Sciatic nerve (tissue), 2 donors: ENCODE measurements at regions of chr2 and their contacts with region 1.

Region 1: DNA sequence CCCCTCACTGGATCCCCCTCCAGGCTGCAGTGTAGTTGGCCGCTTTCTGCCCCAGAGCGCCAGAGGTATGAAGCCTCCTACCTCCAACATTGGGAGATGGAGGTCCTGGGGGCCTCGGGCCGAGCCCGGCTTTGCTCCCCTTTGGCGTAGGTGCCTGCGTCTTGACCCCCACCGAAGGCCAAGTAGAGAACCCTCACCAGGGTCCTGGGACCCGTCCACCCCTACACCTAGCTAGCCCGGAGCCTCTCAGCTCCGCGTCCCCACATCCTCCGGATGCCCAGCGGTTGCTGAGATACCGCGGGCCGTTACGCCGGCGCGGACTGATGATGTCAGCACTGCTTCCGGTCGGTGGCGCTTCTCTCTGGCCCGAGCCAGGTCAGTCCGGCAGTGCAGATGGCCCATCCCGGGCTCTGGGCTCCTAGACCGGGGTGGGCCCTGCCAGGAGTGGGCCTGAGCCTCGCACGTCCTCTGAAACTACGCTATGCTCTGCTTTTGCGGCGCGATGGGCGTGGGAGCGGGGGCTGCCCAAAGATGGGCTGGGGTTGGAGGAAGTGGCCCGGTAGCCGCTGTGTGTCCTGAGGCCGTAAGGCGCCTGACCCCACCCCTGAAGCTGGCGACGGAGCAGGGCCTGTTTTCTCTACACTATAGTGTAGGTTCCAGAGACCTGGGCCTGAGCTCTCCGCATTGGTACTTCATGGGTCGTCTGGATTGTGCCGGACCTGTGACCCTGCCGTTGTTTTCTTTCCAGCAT is at the starts of genes GLB1L and STK16:
- DNase-seq: peak; percentile 98
- ATAC-seq: peak; percentile 97
- total RNA-seq, gene GLB1L: 4.2 TPM
- total RNA-seq, gene STK16: 16.5 TPM

Region 2: DNA sequence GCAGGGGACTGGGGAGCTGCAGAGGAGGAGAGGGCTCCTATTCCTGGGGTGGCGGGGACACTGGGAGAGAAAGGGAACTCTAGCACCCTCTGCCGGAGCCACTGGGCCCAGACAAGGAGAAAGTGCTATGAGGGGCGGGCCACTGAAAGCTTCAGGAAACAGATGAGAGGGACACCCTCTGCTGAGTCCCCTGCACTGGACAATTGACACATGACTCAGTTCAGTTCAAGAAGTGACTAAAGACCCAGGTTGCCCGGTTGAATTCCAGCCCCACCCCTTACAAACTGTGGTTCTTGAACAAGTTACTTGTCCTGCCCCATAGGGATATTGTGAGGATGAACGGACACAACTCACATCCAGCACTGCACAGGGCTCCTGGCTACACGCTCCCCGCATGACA is 1171.3 kb before region 1 on chr2:
- intact Hi-C with region 1: loop called (anchors 10 kb)
- DNase-seq: no peak
- ATAC-seq: peak; percentile 21

Region 3: DNA sequence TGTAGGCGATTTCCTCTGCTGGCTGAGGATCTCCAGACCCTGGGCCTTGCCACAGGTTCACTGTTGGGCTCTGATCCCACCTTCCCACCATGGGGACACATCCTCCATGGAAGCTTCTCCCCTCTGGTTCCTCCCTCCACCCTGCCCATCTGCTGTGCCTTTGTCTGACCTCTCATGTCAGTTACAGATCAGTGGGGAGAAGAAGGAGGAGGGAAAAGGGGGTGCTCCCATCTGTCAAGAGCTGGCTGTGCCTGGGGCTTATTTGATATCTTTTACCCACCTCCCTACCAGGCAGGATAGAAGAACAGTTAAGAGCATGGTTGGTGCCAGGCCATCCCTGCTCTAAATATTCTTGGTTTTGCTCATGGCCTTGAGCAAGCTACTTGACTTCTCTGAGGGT is 21.6 kb after region 1 on chr2:
- intact Hi-C with region 1: loop called (anchors 1 kb)
- DNase-seq: no peak
- ATAC-seq: no peak

Region 4: DNA sequence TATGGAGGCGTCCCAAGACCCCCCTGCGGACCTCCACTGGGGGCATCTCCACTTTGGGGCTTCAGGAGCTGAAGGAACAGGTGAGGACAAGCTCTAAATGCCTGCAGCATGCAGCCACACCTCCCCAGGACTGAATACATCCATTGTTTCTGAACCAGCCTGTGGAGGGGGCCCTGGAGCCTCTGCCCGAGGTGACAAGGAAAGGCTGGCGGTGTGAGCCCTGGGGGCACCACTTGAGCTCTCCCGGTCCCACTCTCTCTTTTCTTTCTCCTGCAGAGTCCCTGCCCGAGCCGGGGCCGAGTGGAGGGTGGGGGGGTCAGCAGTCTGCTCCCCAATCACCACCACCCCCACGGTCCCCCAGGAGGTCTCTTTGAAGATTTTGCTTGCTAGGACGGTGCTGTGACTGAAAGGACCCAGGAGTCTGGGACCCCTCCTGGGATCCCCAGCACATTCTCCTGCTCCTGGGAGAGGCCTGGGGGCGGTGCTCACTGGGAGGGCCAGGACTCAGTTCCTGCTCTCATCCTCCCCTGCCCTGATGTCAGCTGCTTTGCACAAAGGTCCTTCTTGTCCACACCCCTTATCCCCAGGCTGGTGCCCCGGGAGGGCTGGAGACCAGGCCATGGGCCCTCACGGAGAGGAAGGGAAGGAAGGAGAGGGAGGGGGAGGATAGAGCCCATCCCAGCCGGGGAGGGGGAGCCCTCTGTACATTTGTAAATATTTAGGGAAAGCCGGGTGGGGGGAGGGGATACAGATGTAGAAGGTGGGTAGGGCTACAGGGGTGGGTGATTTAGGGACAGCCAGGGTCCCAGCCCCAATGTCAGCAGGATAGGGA is 292.6 kb after region 1 on chr2:
- intact Hi-C with region 1: no loop called
- DNase-seq: no peak
- ATAC-seq: peak; percentile 3